H1 (cell line): ENCODE measurements at regions of chr14 and their contacts with region 1.

Region 1: GRCh38 chr14:20970983-20971704 is 15.9 kb downstream of the RNASE2 start:
- DNase-seq: peak; percentile 82 to 94
- H3K4me3 ChIP-seq: peak overlapping the region; percentile 47 to 88 (median 75)
- H3K27ac ChIP-seq: peak overlapping the region; percentile 39; the same call in 1 of the 2 replicates
- H3K4me1 ChIP-seq: peaks cover 0 to 2% (median under 1%) of the 10 kb centered on the region in 4 experiments; a peak in 2 of 7 replicates
- H3K27me3 ChIP-seq: peaks cover 0 to 3% (median 1%) of the 10 kb centered on the region in 4 experiments; a peak in 2 of 7 replicates
- CTCF ChIP-seq: peak; percentile 95 to 98 (median 96)
- EP300 ChIP-seq: peak in 1 of 2 experiments; percentile 84; a peak in 1 of 3 replicates
- POLR2A ChIP-seq: peak; percentile 46 to 47; a peak in 2 of 3 replicates
- RAD21 ChIP-seq: peak; percentile 76 to 81

Region 2: GRCh38 chr14:20697273-20698017 is 273.7 kb before region 1 on chr14:
- CTCF ChIA-PET with region 1: interaction called, 16 read pairs
- POLR2A ChIA-PET with region 1: interaction called, 3 read pairs
- DNase-seq: peak in 1 of 2 experiments; percentile 77
- H3K4me3 ChIP-seq: no peak overlapping the region
- H3K27ac ChIP-seq: no peak overlapping the region
- H3K4me1 ChIP-seq: no peaks in the 10 kb centered on the region; a peak in 1 of 7 replicates
- H3K27me3 ChIP-seq: no peaks in the 10 kb centered on the region
- CTCF ChIP-seq: peak; percentile 76 to 90 (median 87)
- EP300 ChIP-seq: no peak
- POLR2A ChIP-seq: no peak
- RAD21 ChIP-seq: peak; percentile 97 to 98

Region 3: GRCh38 chr14:20873370-20874177 is 97.6 kb before region 1 on chr14:
- CTCF ChIA-PET with region 1: interaction called, 12 read pairs
- POLR2A ChIA-PET with region 1: interaction called, 8 read pairs
- DNase-seq: peak; percentile 87 to 92
- H3K4me3 ChIP-seq: peak overlapping the region; percentile 27 to 55 (median 38); a peak in 7 of 8 replicates
- H3K27ac ChIP-seq: no peak overlapping the region
- H3K4me1 ChIP-seq: no peaks in the 10 kb centered on the region
- H3K27me3 ChIP-seq: no peaks in the 10 kb centered on the region; a peak in 4 of 7 replicates
- CTCF ChIP-seq: peak; percentile 89 to 92 (median 89)
- EP300 ChIP-seq: no peak
- POLR2A ChIP-seq: peak in 1 of 2 experiments; percentile 64; a peak in 2 of 3 replicates
- RAD21 ChIP-seq: peak; percentile 90 to 91

Region 4: DNA sequence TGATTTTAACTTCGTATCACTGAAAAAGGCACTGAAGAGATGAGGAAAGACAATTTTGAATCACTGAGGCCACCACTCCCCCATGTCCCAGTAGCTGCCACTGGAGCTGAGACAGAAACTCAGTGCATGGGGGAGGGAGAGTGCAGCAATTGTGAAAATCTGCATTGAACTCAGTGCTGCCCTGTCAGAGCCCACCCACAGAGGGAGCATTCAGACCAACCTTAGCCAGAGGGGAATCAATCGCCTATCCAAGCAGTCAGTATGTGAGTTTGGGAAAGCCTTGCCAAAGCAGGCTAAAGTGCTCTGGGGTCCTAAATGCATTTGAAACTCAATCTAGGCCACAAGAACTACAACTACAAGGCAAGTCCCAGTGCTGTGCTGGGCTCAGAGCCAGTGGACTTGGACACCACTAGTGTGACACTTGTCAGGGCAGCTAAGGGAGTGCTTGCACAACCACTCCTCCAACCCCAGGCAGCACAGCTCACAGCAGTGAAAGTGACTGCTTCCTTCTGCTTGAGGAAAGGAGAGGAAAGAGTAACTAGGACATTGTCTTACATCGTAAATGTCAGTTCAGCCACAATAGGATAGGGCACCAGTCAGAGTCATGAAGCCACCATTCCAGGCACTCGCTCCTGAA is 66.6 kb before region 1 on chr14:
- CTCF ChIA-PET with region 1: interaction called, 21 read pairs
- POLR2A ChIA-PET with region 1: no interaction called
- DNase-seq: peak in 1 of 2 experiments; percentile 52
- H3K4me3 ChIP-seq: no peak overlapping the region
- H3K27ac ChIP-seq: no peak overlapping the region
- H3K4me1 ChIP-seq: peaks cover 0 to 3% (median 0%) of the 10 kb centered on the region in 4 experiments; a peak in 1 of 7 replicates
- H3K27me3 ChIP-seq: no peaks in the 10 kb centered on the region
- CTCF ChIP-seq: peak; percentile 52 to 59 (median 57)
- EP300 ChIP-seq: no peak
- POLR2A ChIP-seq: no peak
- RAD21 ChIP-seq: peak; percentile 61 to 67

Region 5: GRCh38 chr14:20956376-20956976 is 14.7 kb before region 1 on chr14:
- CTCF ChIA-PET with region 1: interaction called, 42 read pairs
- POLR2A ChIA-PET with region 1: interaction called, 9 read pairs
- DNase-seq: no peak
- H3K4me3 ChIP-seq: no peak overlapping the region
- H3K27ac ChIP-seq: no peak overlapping the region
- H3K4me1 ChIP-seq: no peaks in the 10 kb centered on the region
- H3K27me3 ChIP-seq: no peaks in the 10 kb centered on the region
- CTCF ChIP-seq: no peak
- EP300 ChIP-seq: no peak
- POLR2A ChIP-seq: no peak
- RAD21 ChIP-seq: no peak

Region 6: DNA sequence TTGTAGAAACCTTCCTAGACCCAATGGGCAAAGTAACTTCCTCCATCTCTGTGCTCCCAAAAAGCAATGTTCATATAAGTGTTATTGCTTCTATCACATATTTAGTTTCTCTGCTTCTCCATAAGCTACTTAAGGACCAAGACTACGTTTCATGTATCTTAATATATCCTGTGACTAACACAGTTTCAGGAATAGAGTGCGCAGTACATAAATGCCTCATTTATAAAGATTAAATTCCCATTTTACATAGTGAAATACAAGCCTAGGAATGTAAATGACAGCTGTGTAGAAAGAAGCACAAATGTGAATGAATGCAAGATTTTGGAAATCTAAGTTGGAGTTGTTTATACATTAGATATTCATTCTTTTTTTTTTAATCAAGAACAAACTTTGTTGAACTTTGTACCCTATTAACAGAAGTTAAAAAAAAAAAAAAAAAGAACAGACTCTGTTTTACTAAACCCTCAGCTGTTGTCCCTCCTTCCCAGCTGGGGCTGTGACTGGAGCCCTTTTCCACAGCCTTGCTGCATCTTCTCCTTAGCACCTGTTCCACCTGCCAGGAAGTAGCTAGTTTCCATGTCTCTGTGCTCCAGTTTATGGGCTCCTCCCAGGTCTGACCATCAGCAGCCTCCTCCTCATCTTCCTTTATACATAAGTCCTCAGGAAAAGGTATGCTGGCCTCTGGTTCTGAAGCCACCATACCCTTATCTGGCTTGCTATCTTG is 11.7 kb after region 1 on chr14:
- CTCF ChIA-PET with region 1: interaction called, 21 read pairs
- POLR2A ChIA-PET with region 1: interaction called, 6 read pairs
- DNase-seq: no peak
- H3K4me3 ChIP-seq: no peak overlapping the region
- H3K27ac ChIP-seq: no peak overlapping the region
- H3K4me1 ChIP-seq: no peaks in the 10 kb centered on the region
- H3K27me3 ChIP-seq: peaks cover 0 to 2% (median 0%) of the 10 kb centered on the region in 4 experiments; a peak in 2 of 7 replicates
- CTCF ChIP-seq: no peak
- EP300 ChIP-seq: no peak
- POLR2A ChIP-seq: no peak
- RAD21 ChIP-seq: no peak

Region 7: DNA sequence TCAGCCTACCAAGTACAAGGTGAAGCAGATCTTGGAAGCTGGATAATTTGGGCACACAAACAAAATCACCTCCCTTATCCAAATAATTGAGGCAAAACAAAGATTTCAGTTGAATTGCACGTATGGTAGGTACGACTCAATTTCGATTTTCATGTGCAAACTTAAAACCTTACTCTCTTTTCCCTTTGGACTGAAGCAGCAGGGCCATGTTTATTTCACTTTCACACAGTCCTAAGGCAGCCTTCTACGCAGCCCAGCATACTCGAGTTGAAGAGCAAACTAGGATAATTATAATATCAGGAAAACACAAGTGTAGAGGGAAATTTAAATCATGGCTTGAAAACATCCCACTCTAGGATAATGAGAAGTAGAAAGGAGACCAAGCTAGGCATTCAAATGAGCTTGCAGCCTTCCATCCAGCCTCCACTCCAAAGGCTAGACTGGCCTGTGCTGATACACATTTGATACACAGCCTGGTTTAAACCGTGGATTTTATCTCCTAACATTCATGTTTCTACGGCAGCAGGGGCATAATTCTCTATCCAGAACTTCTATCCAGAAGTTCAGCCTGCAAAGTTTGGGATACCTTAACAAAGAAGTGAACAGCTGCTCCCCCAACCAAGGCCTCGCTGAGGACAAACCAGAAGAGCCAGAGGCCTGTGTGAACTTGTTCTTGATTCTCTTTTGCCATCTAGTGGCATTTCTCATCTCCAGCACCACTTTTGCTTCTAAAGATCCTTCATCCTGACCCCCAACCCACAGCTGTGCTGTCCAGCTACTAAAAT is 68.6 kb after region 1 on chr14:
- CTCF ChIA-PET with region 1: interaction called, 14 read pairs
- POLR2A ChIA-PET with region 1: no interaction called
- DNase-seq: peak in 1 of 2 experiments; percentile 53
- H3K4me3 ChIP-seq: no peak overlapping the region
- H3K27ac ChIP-seq: no peak overlapping the region
- H3K4me1 ChIP-seq: peaks cover 8 to 11% (median 10%) of the 10 kb centered on the region in 4 experiments; a peak in 6 of 7 replicates
- H3K27me3 ChIP-seq: peaks cover 0 to 3% (median 0%) of the 10 kb centered on the region in 4 experiments; a peak in 1 of 7 replicates
- CTCF ChIP-seq: peak in 2 of 3 experiments; percentile 68 to 83; a peak in 3 of 4 replicates
- EP300 ChIP-seq: no peak
- POLR2A ChIP-seq: no peak
- RAD21 ChIP-seq: peak; percentile 91

Region 8: GRCh38 chr14:21220874-21221477 is 249.8 kb after region 1 on chr14:
- CTCF ChIA-PET with region 1: no interaction called
- POLR2A ChIA-PET with region 1: no interaction called
- DNase-seq: no peak
- H3K4me3 ChIP-seq: no peak overlapping the region
- H3K27ac ChIP-seq: 0 out of 2 replicates have a peak overlapping the region, but pooled peaks have one; percentile 13
- H3K4me1 ChIP-seq: peaks cover 0 to 2% (median 0%) of the 10 kb centered on the region in 4 experiments; a peak in 2 of 7 replicates
- H3K27me3 ChIP-seq: no peaks in the 10 kb centered on the region
- CTCF ChIP-seq: no peak
- EP300 ChIP-seq: no peak
- POLR2A ChIP-seq: no peak
- RAD21 ChIP-seq: no peak